Activated CD4-positive, alpha-beta T cell treated with anti-CD3 and anti-CD28 coated beads, Interleukin-2, amount 10 ng/mL, durations not matched to agents 7 days and 5 days (primary cell): ENCODE measurements at regions of chr6 and their contacts with region 1.

Region 1: DNA sequence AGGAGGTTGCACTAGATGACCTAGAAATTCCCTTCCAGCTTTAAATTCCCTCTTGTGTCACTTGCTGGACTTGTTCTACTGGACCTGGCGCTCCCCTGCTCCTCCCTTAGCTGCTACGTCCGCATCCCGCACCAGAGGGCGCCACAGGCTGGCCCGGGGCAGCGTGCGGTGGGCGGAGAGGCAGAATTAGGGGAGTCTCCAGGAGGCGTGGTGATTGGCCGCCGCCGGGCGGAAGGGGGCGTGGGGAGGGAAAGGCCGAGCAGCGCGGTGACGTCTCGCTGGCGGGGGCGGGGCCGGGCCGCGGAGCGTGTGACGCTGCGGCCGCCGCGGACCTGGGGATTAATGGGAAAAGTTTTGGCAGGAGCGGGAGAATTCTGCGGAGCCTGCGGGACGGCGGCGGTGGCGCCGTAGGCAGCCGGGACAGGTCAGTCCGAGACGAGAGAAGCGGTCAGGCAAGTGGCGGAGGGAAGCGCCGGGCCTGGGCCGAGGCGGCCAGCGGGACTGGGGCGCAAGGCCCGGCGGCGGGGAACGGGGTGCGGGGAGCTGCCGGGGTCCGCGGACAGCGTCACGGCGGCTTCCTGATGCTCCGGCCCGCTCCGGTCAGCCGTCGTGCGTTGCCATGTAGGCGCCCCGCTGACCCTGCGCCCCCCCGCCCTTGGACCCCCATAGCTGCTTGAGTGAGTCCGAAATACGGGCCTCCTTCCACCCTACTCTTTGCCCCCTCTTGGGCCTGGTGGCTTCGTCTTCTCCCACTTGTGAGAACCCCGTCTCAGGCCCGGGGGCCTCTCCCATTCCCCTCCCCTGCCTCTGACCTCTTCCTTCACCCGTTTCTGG is at the start of gene PPARD:
- DNase-seq: peak; percentile 97
- H3K4me3 Mint-ChIP-seq: peak within 1 kb of the TSS; percentile 96
- H3K27ac Mint-ChIP-seq: peak within 1 kb of the TSS; percentile 93
- H3K4me1 Mint-ChIP-seq: peaks cover 53% of the 10 kb centered on the region
- H3K27me3 Mint-ChIP-seq: peaks cover under 1% of the 10 kb centered on the region
- total RNA-seq, gene PPARD: 24.4 to 25.8 TPM

Region 2: GRCh38 chr6:35213824-35214756 is 128.4 kb before region 1 on chr6 and contains the start of gene SCUBE3:
- CTCF ChIA-PET with region 1: no interaction called
- POLR2A ChIA-PET with region 1: no interaction called
- DNase-seq: peak; percentile 16
- H3K4me3 Mint-ChIP-seq: peak within 1 kb of the TSS; percentile 45
- H3K27ac Mint-ChIP-seq: no peak within 1 kb of the TSS
- H3K4me1 Mint-ChIP-seq: peaks cover 7% of the 10 kb centered on the region
- H3K27me3 Mint-ChIP-seq: peaks cover 74% of the 10 kb centered on the region
- total RNA-seq, gene SCUBE3: not detected

Region 3: DNA sequence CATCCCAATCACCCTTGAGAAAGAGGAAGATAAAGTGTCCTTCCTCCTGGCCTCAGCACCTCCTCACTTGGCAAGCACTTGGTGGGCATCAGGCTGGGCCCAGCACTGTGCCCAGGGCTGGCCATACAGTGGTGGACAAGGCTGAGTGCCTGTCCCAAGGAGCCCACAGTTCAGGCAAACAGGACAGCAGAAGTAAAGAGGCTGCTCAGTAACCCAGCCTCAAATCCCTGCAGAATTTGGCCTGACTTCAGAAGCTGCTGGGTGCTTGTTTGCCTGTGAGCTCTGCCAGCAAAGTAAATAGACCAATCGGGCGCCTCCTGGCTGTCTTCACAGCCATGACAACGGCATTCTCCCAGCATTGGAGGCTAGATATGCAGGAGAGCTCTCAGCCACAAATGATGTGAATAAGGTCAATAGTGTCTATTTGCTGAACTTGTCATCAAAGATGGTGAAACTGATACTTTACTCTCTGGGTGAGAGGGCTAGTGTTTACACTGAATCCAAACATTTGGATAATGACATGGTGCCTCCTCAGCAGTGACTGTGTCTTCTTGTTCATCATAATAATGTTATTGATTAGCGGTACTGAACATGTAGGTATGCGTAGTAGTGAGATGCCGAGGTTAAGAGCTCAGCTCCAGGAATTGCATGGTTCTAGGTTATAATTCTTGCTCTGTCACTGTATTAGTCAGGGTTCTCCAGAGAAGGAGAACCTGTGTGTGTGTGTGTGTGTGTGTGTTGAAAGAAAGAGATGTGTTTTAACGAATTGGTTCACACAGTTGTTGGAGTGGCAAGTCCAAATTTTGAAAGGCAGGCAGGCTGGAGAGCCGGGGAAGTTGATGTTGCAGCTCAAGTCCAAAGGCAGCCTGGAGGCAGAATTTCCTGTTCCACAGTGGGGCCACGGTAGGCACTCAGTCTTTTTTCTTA is 72.9 kb after region 1 on chr6:
- CTCF ChIA-PET with region 1: interaction called, 10 read pairs
- POLR2A ChIA-PET with region 1: no interaction called
- DNase-seq: peak; percentile 18
- H3K4me3 Mint-ChIP-seq: no peak overlapping the region
- H3K27ac Mint-ChIP-seq: peak overlapping the region; percentile 55
- H3K4me1 Mint-ChIP-seq: peaks cover 76% of the 10 kb centered on the region
- H3K27me3 Mint-ChIP-seq: no peaks in the 10 kb centered on the region

Region 4: DNA sequence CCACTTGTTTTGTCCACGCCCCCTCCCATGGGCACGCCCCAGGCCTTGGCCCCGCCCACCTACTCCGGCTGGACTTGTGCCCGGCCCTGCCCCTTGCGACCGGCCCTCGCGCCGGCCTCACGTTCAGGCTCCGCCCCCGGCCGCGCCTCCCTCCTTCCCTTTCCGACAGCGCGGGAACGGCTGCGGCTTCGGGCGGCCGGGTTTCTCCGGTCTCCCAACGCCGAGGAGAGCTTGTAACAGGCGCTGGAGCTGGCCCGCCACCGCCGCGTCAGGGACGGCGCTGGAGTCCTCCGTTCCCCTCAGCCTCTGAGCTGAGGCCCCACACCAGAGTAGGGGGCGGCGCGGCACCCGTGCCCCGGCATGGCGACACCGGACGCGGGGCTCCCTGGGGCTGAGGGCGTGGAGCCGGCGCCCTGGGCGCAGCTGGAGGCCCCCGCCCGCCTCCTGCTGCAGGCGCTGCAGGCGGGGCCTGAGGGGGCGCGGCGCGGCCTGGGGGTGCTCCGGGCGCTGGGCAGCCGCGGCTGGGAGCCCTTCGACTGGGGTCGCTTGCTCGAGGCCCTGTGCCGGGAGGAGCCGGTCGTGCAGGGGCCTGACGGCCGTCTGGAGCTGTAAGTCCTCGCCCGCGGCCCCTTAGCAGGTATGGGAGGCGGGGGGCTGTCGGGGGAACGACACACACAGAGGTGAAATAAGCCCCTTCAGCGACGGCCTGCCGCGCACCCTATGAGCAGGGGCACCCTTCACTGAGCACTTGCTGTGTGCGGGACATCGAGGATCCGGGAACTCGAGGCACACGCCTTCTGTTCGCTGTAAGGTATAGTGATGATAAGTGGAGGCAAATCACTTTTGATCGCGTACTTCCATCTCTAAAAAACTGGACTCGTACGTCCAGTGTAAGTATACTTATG is 110.0 kb after region 1 on chr6 and contains the start of gene FANCE:
- CTCF ChIA-PET with region 1: interaction called, 65 read pairs
- POLR2A ChIA-PET with region 1: no interaction called
- DNase-seq: peak; percentile 91
- H3K4me3 Mint-ChIP-seq: peak within 1 kb of the TSS; percentile 81
- H3K27ac Mint-ChIP-seq: peak within 1 kb of the TSS; percentile 75
- H3K4me1 Mint-ChIP-seq: peaks cover 48% of the 10 kb centered on the region
- H3K27me3 Mint-ChIP-seq: peaks cover 9% of the 10 kb centered on the region
- total RNA-seq, gene FANCE: 11.7 to 13.0 TPM

Region 5: DNA sequence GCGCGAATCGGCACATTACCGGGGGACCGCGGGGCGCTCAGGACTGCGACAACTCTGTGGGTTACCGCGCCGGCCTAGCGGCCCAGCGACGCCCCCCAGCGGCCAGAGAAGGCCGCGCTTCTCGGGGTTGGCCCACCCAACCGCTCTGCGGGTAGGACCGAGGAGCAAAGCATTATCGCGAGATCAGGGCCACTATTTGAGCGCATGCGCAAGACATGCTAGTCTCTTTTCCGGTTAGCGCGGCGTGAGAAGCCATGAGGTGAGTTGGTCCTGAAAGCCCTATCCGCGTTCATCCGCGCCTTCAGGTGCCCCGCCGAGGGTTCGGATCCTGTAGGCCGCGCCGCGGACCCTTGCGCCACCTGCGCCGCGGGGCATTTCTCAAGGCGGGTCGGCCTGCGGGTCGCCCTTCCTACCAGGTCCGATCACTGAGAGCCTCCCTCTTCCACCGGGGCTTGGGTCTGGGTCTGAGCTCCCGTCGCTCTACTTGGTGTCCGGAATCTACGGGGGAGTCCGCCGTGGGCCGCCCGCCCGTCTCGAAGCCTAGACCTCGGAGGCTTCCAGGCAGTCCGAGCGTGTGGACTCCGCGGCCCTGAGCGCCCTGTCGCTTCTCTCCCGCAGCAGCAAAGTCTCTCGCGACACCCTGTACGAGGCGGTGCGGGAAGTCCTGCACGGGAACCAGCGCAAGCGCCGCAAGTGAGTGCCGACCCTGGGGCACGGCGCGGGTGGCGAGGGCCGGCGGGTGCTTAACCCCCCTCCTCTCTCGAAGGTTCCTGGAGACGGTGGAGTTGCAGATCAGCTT is 125.9 kb after region 1 on chr6 and contains the start of gene RPL10A:
- CTCF ChIA-PET with region 1: interaction called, 15 read pairs
- POLR2A ChIA-PET with region 1: no interaction called
- DNase-seq: peak; percentile 98
- H3K4me3 Mint-ChIP-seq: peak within 1 kb of the TSS; percentile 91
- H3K27ac Mint-ChIP-seq: peak within 1 kb of the TSS; percentile 100
- H3K4me1 Mint-ChIP-seq: peaks cover 42% of the 10 kb centered on the region
- H3K27me3 Mint-ChIP-seq: no peaks in the 10 kb centered on the region
- total RNA-seq, gene RPL10A: 1,411 to 1,499 TPM